Ascending aorta (tissue), 2 donors: ENCODE measurements at regions of chr11 and their contacts with region 1.

Region 1: DNA sequence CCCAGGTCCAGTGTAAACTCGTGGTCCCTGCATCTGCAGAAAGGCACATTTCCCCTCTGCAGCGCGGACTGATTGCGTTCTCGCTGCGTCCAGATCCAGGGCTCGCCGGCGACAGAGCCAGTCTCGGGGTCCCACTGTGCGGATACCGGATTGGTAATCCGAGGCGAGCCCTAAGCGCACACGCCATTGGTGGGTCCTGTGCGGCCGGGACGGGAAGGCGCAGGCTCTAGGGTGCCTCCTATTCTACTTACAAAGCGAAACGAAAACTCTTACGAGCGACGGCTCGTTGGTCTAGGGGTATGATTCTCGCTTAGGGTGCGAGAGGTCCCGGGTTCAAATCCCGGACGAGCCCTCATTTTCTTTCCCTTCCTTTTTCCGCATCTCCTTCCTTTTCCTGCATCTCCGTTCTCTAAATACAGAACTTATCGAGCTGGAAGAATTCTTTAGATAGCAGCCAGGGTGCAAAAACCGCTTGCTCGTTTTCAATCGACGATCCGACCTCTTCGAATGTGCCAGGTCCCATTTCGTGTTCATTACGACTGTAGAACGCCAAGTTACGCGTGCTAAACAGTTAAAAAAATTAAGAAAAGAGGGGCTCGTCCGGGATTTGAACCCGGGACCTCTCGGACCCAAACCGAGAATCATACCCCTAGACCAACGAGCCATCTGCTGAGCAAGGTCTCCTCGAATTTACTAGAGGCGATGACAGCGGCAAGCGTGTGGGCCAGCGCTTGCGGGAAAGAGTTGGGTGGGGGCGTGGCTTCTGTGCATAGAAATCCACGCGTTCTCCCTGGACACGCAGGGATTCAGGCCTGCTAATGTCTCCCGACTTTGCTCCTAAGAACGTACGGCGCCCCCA is 29.2 kb upstream of the WNT11 start:
- DNase-seq: peak; percentile 66 to 95
- H3K4me3 ChIP-seq: peak overlapping the region; percentile 70 to 89
- H3K27ac ChIP-seq: peak overlapping the region; percentile 90
- H3K4me1 ChIP-seq: peaks cover 0 to 6% of the 10 kb centered on the region in 2 donors
- H3K27me3 ChIP-seq: no peaks in the 10 kb centered on the region
- CTCF ChIP-seq: no peak

Region 2: DNA sequence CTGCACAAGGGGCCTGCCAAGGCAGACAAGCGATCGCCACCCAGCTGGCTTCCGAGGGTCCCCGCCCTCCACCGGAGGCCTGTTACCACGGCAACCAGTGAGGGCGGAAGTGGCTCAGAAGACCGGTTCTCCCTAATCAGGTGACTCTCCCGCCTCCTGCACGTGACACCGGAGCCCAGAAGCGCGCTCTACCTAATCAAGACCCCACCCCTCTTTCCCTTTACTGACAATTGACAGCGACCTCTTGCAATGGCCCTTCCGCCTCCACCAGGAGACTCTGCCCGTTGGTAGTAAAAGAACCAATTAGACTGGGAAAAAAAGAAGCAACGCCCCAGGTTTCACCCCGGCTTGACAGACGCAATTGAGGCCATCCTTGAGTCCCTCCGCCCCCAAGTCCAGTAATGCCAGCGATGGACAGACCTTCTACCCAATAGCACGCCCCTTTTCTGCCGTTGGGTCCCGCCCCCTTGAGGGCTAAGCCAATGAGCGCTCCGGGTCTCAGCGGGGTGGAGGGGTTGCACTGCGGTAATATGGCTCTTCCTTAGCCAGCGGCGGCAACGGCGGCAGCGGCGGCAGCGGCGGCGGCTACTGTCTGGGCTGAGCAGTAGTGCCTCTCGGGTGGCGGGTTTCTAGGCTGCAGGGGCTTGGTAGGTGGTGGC is 420.6 kb before region 1 on chr11 and contains the start of gene UVRAG:
- intact Hi-C with region 1: loop called (anchors 10 kb)
- DNase-seq: peak; percentile 98 to 99
- H3K4me3 ChIP-seq: peak within 1 kb of the TSS; percentile 75 to 93
- H3K27ac ChIP-seq: peak within 1 kb of the TSS; percentile 88 to 89
- H3K4me1 ChIP-seq: peaks cover 3 to 9% of the 10 kb centered on the region in 2 donors
- H3K27me3 ChIP-seq: no peaks in the 10 kb centered on the region
- CTCF ChIP-seq: no peak
- total RNA-seq, gene UVRAG: 45.2 TPM

Region 3: DNA sequence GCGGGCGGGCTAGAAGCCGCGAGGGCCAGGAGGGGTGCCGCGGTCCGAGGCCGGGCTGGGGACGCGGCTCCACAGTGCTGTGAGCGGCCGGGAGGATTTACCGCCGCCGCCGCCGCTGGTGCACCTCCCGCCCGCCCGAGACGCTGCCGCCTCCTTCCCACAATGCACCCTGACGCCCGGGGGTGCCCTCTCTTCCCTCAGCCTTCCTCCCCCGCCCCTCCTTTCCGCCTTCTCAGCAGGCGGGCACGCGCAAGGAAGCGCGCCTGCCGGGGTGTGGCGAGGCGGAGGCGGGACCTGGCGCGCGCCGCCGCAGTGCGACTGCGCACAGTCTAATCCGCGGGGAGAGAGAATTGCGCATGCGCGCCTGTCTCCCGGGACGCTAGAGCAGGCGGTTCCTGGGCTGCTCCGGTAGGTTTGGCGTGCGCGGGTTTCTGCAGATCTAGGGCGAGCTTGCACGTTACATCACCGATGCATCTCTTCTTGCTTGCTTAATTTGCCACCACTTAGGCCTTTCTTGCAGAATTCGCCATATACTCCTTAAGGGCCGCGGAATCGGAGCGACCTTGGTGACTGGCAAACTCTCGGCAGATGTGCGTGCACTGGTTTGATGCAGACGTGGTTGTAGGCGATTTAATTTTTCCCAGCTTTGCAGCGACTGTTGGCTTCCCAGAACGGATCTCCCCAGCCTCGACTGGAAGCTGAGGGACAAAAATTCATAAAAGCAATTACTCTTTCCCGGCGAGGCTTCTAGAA is 145.7 kb after region 1 on chr11 and contains the starts of genes GVQW3 and THAP12:
- intact Hi-C with region 1: loop called (anchors 1 kb)
- DNase-seq: peak; percentile 88 to 99
- H3K4me3 ChIP-seq: peak within 1 kb of the TSS; percentile 89 to 98
- H3K27ac ChIP-seq: peak within 1 kb of the TSS; percentile 73 to 84
- H3K4me1 ChIP-seq: peaks cover 0 to 21% of the 10 kb centered on the region in 2 donors
- H3K27me3 ChIP-seq: no peaks in the 10 kb centered on the region
- CTCF ChIP-seq: peak in 2 of 3 experiments; percentile 19 to 26
- total RNA-seq, gene GVQW3: not detected
- total RNA-seq, gene THAP12: 12.7 TPM

Region 4: DNA sequence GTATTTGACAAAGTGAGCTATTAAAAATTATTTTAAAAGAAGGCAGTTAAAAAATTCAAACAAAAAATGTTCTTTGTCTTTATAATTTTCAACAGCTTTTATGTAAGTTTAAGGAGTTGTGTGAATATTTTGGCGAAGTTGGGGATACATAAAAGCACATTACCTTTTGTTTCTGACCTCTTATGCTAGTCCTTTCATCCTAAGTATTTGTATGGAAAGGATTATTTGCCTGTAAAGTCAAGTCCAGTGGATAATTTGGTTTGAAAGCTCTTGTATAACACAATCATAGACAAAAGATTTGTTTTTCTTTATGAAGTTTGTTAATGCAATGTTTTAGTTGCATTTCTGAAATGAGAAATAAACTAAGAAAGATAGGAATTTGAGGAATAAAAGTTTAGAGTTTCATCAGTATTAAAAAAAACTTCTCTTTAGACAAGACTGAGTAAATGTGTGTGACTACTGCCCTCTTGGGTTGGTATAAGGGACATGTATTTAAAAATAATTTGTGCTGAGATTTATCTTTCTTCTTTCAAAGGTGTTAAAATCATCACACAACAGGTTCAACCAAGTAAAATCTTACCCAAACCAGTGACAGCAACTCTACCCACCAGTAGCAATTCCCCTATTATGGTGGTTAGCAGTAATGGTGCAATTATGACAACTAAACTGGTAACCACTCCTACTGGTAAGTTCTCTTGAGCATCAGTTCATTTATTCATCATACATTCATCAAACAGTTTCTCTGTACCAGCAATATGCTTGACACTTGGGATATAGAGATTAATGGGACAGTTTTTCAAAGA is 277.6 kb after region 1 on chr11:
- intact Hi-C with region 1: loop called (anchors 10 kb)
- DNase-seq: no peak
- H3K4me3 ChIP-seq: no peak overlapping the region
- H3K27ac ChIP-seq: no peak overlapping the region
- H3K4me1 ChIP-seq: peaks cover 0 to 10% of the 10 kb centered on the region in 2 donors
- H3K27me3 ChIP-seq: no peaks in the 10 kb centered on the region
- CTCF ChIP-seq: peak in 2 of 3 experiments; percentile 44 to 52

Region 5: DNA sequence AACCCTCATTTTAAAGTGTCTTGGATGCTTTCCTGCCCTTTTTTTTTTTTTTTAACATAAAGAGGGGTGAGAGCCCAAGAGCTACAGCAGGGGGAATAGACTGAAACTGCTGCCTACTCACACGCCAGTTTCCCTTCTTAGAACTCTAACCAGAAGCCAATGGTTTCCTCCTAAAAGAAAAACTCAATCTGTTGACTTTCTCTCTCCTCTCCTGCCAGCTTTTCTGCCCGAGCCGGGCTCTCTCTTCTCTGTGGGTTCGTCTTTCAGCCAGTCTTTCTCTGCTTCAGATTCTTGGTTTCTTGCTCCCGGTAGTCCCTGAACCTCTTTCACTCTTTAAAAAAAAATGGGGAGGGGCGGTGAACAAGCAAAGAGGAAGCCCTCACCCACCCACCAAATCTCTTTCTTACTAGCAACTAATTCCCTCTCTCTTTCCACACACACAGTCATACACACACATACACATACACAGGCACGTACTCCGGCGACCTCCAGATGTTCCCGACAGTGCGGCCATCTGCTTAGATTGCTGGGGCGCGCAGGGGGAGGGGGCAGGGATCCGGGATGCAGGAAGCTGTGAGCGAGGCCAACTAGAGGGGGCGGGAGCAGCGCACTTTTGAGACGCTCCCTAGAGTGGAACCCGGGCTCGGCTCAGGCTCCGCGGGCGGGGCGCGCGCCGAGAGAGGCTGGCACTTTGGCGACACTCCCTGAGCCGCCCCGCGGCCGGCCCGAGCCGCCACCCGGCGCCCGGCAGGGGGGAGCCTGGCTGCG is 547.2 kb after region 1 on chr11:
- intact Hi-C with region 1: loop called (anchors 10 kb)
- DNase-seq: peak; percentile 43 to 93
- H3K4me3 ChIP-seq: peak overlapping the region; percentile 81 to 86
- H3K27ac ChIP-seq: peak overlapping the region; percentile 93 to 95
- H3K4me1 ChIP-seq: peaks cover 0 to 8% of the 10 kb centered on the region in 2 donors
- H3K27me3 ChIP-seq: no peaks in the 10 kb centered on the region
- CTCF ChIP-seq: no peak

Region 6: DNA sequence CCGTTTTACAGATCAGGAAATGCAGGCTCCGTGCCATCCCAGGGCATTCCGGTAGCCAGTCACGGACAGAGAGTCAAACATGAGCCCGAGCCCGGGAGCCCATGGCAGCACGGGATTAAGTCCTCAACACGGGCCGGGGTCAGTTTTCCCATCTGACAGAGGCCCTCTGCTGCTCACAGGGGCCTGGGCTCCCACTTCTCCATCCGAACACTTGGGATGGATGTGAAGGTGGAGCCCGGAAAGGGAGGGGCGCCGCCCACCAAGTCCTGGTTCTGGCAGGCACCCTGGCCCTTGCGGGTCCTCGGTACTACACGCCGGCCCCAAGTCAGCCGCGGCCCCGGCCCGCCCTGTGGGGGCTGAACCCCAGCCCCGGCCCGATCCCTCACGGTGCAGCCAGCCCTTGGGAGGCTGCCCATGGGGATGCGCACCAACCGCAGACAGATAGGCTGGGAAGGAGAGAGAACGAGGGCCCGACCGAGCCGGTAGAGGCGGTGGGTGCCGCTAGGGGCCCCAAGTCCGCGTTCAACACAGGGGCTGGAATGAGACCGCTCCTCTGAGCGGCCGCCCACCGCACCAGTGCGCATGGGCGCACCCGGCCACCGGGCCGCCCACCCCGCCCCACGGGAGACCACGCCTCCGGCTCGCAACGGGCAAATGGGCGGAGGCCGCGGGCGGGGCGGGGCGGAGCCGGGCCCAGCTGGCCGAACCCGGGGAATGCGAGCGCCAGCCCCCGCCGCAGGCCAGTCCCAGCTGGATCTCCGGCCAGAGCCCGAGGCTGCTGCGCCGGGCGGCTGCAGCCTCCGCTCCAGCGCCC is 831.0 kb after region 1 on chr11 and contains the start of gene CAPN5:
- intact Hi-C with region 1: loop called (anchors 10 kb)
- DNase-seq: peak; percentile 58 to 96
- H3K4me3 ChIP-seq: peak within 1 kb of the TSS; percentile 80 to 84
- H3K27ac ChIP-seq: peak within 1 kb of the TSS; percentile 93
- H3K4me1 ChIP-seq: peaks cover 0 to 19% of the 10 kb centered on the region in 2 donors
- H3K27me3 ChIP-seq: no peaks in the 10 kb centered on the region
- CTCF ChIP-seq: peak; percentile 22 to 34 (median 29)
- total RNA-seq, gene CAPN5: 7.9 TPM